MCF 10A (cell line): ENCODE measurements at regions of chr19 and their contacts with region 1.

Region 1: DNA sequence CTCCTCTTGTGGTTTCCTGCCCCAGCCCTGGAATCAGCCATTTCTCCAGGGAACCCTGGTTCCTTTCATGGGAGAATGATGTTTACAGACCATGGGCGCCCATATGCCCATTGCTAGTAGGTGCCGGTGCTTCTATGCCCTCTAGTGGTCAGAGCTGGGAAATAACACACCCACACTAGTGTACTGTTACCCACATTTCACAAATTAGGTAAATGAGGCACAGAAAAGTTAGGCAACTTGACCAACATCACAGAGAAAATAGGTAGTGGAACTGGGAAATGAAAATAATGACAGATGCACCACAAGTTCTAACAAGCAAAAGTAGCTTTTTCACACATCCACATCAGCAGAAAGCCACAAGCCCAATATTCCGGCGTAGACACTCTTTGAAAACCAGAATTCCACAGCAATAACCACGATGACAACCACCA is 1.3 kb upstream of the CEACAM3 start:
- DNase-seq: peak; percentile 64
- H3K4me3 Mint-ChIP-seq: no peak overlapping the region
- H3K27ac Mint-ChIP-seq: no peak overlapping the region
- H3K4me1 Mint-ChIP-seq: peaks cover 10% of the 10 kb centered on the region
- H3K27me3 Mint-ChIP-seq: peaks cover 70% of the 10 kb centered on the region
- CTCF ChIP-seq: peak; percentile 75

Region 2: DNA sequence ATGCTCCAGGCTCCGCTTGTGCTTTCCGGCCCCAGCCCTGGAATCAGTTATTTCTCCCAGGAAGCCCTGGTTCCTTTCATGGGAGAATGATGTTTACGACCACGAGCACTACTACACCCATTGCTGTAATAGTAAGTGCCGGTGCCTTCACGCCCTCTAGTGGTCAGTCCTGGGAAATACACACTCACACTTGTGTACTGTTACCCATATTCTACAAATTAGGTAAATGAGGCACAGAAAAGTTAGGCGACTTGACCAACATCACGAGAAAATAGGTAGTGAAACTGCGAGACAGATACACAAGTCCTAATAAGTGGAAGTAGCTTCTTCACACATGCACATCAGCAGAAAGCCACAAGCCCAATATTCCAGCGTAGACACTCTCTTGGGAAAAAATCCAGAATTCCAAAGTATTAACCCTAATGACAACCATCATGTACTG is 197.4 kb before region 1 on chr19:
- CTCF ChIA-PET with region 1: no interaction called
- POLR2A ChIA-PET with region 1: no interaction called
- intact Hi-C with region 1: no loop called
- DNase-seq: peak; percentile 68
- H3K4me3 Mint-ChIP-seq: no peak overlapping the region
- H3K27ac Mint-ChIP-seq: no peak overlapping the region
- H3K4me1 Mint-ChIP-seq: peaks cover 6% of the 10 kb centered on the region
- H3K27me3 Mint-ChIP-seq: peaks cover 85% of the 10 kb centered on the region
- CTCF ChIP-seq: peak; percentile 86

Region 3: DNA sequence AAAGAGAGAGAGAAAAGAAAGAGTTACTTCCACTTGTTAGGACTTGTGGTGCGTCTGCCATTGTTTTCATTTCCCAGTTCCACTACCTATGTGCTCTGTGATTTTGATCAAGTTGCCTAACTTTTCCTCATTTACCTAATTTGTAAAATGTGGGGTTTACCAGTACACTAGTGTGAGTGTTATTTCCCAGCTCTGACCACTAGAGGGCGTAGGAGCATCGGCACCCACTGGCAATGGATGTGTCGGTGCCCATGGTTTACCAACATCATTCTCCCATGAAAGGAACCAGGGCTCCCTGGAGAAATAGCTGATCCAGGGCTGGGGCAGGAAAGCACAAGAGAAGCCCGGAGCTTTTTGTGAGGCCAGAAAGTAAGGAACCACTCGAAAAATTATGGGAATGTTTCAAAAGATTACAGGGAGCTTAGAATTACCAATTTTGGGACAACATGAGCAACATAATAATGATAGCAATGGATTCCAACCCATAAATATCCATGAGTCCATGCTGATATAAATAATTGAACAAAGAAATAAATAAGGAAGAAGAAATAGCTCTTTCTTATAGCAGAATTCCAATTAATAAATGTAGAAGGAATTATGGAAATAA is 153.1 kb before region 1 on chr19:
- CTCF ChIA-PET with region 1: interaction called, 12 read pairs
- POLR2A ChIA-PET with region 1: no interaction called
- intact Hi-C with region 1: no loop called
- DNase-seq: peak; percentile 73
- H3K4me3 Mint-ChIP-seq: no peak overlapping the region
- H3K27ac Mint-ChIP-seq: no peak overlapping the region
- H3K4me1 Mint-ChIP-seq: no peaks in the 10 kb centered on the region
- H3K27me3 Mint-ChIP-seq: peaks cover 16% of the 10 kb centered on the region
- CTCF ChIP-seq: peak; percentile 85

Region 4: GRCh38 chr19:41671491-41671890 is 123.6 kb before region 1 on chr19:
- CTCF ChIA-PET with region 1: no interaction called
- POLR2A ChIA-PET with region 1: no interaction called
- intact Hi-C with region 1: no loop called
- DNase-seq: no peak
- H3K4me3 Mint-ChIP-seq: no peak overlapping the region
- H3K27ac Mint-ChIP-seq: no peak overlapping the region
- H3K4me1 Mint-ChIP-seq: no peaks in the 10 kb centered on the region
- H3K27me3 Mint-ChIP-seq: peaks cover 73% of the 10 kb centered on the region
- CTCF ChIP-seq: no peak

Region 5: GRCh38 chr19:41714598-41714997 is 80.4 kb before region 1 on chr19:
- CTCF ChIA-PET with region 1: no interaction called
- POLR2A ChIA-PET with region 1: no interaction called
- intact Hi-C with region 1: no loop called
- DNase-seq: no peak
- H3K4me3 Mint-ChIP-seq: no peak overlapping the region
- H3K27ac Mint-ChIP-seq: no peak overlapping the region
- H3K4me1 Mint-ChIP-seq: no peaks in the 10 kb centered on the region
- H3K27me3 Mint-ChIP-seq: peaks cover 92% of the 10 kb centered on the region
- CTCF ChIP-seq: no peak

Region 6: DNA sequence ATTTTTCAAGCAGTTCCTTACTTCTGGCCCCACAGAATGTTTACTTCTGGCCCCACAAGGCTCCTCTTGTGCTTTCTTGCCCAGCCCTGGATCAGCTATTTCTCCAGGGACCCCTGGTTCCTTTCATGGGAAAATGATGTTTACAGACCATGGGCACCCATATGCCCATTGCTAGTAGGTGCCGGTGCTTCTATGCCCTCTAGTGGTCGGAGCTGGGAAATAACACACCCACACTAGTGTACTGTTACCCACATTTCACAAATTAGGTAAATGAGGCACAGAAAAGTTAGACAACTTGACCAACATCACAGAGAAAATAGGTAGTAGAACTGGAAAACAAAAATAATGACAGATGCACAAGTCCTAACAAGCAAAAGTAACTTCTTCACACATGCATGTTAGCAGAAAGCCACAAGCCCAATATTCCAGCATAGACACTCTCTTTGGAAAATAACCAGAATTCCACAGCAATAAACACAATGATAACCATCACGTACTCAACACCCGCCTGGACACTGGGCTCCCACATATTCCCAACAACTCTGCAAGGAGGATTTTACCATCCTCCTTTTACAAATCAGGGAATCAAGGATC is 41.0 kb before region 1 on chr19:
- CTCF ChIA-PET with region 1: interaction called, 25 read pairs
- POLR2A ChIA-PET with region 1: no interaction called
- intact Hi-C with region 1: no loop called
- DNase-seq: peak; percentile 65
- H3K4me3 Mint-ChIP-seq: no peak overlapping the region
- H3K27ac Mint-ChIP-seq: no peak overlapping the region
- H3K4me1 Mint-ChIP-seq: peaks cover 5% of the 10 kb centered on the region
- H3K27me3 Mint-ChIP-seq: peaks cover 62% of the 10 kb centered on the region
- CTCF ChIP-seq: peak; percentile 76

Region 7: GRCh38 chr19:41811036-41811435 is 16.0 kb after region 1 on chr19:
- CTCF ChIA-PET with region 1: interaction called, 12 read pairs
- POLR2A ChIA-PET with region 1: no interaction called
- intact Hi-C with region 1: no loop called
- DNase-seq: no peak
- H3K4me3 Mint-ChIP-seq: no peak overlapping the region
- H3K27ac Mint-ChIP-seq: no peak overlapping the region
- H3K4me1 Mint-ChIP-seq: no peaks in the 10 kb centered on the region
- H3K27me3 Mint-ChIP-seq: peaks cover 49% of the 10 kb centered on the region
- CTCF ChIP-seq: no peak

Region 8: DNA sequence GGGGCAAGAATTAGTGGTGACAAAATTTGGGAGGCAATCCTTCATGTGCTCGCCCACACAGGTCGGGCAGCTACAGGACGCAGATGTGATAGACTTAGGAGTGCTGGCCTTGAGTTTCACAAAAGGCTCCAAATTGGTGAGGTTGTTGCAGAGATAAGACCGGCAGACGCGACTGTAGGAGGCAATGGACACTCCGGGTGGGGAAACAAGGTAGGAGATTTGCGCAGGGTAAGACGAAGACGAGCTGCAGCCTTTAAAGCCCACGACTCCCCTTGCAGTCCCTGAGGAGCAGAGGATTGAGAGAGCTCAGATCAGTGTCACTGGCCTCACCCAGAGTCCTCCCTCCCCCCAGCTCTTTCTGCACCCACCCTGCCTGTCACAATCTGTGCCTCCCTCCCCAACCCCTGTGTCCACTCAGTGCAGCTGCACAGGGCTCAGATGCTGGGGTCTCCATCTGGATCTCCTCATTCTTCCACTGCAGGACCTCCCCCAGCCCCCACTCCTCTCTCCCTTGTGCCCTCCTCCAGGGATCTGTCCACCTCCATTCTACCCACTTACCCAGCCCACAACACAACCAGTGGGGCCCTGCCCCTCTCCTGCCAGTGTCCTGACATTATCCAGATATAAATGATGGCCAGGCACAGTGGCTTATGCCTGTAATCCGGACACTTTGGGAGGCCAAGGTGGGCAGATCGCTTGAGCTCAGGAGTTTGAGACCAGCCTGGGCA is 43.1 kb after region 1 on chr19:
- CTCF ChIA-PET with region 1: interaction called, 13 read pairs
- POLR2A ChIA-PET with region 1: no interaction called
- intact Hi-C with region 1: no loop called
- DNase-seq: no peak
- H3K4me3 Mint-ChIP-seq: no peak overlapping the region
- H3K27ac Mint-ChIP-seq: no peak overlapping the region
- H3K4me1 Mint-ChIP-seq: no peaks in the 10 kb centered on the region
- H3K27me3 Mint-ChIP-seq: peaks cover 83% of the 10 kb centered on the region
- CTCF ChIP-seq: no peak